Prostate gland (tissue), 2 donors: ENCODE measurements at regions of chr9 and their contacts with region 1.

Region 1: GRCh38 chr9:113463418-113464285 is at the start of gene RGS3:
- DNase-seq: peak; percentile 58
- H3K4me3 ChIP-seq: peak within 1 kb of the TSS; percentile 15 to 25
- H3K27ac ChIP-seq: no peak within 1 kb of the TSS
- H3K4me1 ChIP-seq: no peaks in the 10 kb centered on the region
- H3K27me3 ChIP-seq: no peaks in the 10 kb centered on the region
- CTCF ChIP-seq: peak in 3 of 4 experiments; percentile 22 to 47 (median 37)
- POLR2A ChIP-seq: peak; percentile 40
- total RNA-seq, gene RGS3: 26.5 to 98.9 TPM

Region 2: GRCh38 chr9:113581865-113582697 is 118.4 kb after region 1 on chr9:
- intact Hi-C with region 1: loop called (anchors 5 kb)
- DNase-seq: peak; percentile 48
- H3K4me3 ChIP-seq: peak overlapping the region in 1 of 2 donors; percentile 8
- H3K27ac ChIP-seq: peak overlapping the region; percentile 80 to 83
- H3K4me1 ChIP-seq: peaks cover 36% of the 10 kb centered on the region
- H3K27me3 ChIP-seq: no peaks in the 10 kb centered on the region
- CTCF ChIP-seq: peak in 1 of 4 experiments; percentile 41
- POLR2A ChIP-seq: no peak